ENCODE measurements at regions of chr12 and their contacts with region 1.

Region 1: DNA sequence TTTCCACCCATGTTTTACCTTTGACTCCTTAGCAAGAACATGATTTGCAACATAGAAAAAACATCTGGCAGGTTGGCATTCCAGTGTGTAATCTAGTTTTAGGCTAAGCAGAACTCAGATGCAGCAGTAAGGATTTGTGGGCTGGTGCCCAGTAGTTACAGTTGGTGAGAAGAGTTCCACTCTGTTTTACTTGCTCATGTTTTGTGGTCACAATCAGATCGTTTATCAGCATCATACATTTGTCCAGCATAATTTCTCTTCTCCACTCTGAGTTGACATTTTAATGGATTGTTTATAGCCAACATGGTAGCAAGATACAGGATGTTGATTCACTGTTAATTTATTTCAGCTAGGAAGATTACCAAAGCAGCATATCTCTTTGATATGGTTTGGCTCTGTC is 120.0 kb downstream of the PDE6H start:
- DNase-seq: no peak
- H3K4me3 ChIP-seq: no peak overlapping the region
- H3K27ac ChIP-seq: no peak overlapping the region
- H3K4me1 ChIP-seq: no peaks in the 10 kb centered on the region
- H3K27me3 ChIP-seq: no peaks in the 10 kb centered on the region
- CTCF ChIP-seq: no peak
- POLR2A ChIP-seq: no peak

Region 2: GRCh38 chr12:15181017-15181683 is 88.3 kb after region 1 on chr12:
- intact Hi-C with region 1: no loop called
- DNase-seq: no peak
- H3K4me3 ChIP-seq: no peak overlapping the region
- H3K27ac ChIP-seq: peak overlapping the region in 4 of 5 donors; percentile 5 to 64 (median 42)
- H3K4me1 ChIP-seq: peaks cover 48 to 64% of the 10 kb centered on the region in 2 donors
- H3K27me3 ChIP-seq: no peaks in the 10 kb centered on the region
- CTCF ChIP-seq: no peak
- POLR2A ChIP-seq: no peak

Region 3: GRCh38 chr12:15515010-15515409 is 422.2 kb after region 1 on chr12:
- intact Hi-C with region 1: loop called in 1 of 2 experiments (anchors 10 kb)
- DNase-seq: no peak
- H3K4me3 ChIP-seq: no peak overlapping the region
- H3K27ac ChIP-seq: no peak overlapping the region
- H3K4me1 ChIP-seq: no peaks in the 10 kb centered on the region
- H3K27me3 ChIP-seq: no peaks in the 10 kb centered on the region
- CTCF ChIP-seq: no peak
- POLR2A ChIP-seq: no peak

Measured in adrenal gland (tissue), 19 donors.